Right ventricle myocardium inferior (tissue), 1 donor: ENCODE measurements at regions of chr4 and their contacts with region 1.

Region 1: DNA sequence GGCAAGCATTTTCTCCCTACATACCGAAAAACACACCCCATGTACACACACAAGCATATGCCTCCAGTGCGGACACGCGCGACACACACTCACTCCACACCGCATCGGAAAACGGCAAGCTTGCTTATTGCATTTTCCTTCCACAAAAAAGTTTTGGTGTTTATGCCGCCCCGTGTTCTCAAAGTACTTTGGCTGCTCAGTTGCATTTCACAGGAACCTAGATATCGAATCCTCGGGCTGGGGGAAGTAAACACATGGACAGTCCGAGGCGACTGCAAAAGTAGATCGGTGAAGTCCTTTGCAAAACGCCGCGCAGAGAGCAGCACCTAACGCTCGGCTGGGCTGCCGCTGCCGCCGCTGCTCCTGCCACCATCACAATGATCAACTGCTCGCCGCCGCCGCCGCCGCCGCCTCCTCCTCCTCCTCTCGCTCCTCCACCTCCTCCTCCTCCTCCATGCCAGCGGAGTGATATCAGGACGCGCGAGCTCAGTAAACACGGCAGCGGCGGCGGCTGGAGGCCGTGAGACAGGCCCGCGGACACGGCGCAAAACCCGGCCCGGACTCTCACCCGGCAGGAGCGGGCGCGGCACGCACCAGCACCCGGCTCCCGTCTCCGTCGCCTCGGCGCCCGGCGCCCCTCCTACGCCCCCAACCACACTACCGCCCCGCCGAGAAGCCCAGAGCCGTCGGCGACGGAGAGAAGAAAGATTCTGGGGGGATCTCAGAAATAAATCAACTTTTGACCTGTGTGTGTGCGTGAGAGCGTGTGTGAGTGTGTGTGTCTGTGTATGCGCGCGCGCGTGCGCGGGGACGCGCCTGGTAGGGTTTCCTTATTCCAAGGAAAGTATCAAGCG is at the start of gene MAML3:
- DNase-seq: peak; percentile 97
- ATAC-seq: peak; percentile 75
- total RNA-seq, gene MAML3: 2.3 TPM

Region 2: DNA sequence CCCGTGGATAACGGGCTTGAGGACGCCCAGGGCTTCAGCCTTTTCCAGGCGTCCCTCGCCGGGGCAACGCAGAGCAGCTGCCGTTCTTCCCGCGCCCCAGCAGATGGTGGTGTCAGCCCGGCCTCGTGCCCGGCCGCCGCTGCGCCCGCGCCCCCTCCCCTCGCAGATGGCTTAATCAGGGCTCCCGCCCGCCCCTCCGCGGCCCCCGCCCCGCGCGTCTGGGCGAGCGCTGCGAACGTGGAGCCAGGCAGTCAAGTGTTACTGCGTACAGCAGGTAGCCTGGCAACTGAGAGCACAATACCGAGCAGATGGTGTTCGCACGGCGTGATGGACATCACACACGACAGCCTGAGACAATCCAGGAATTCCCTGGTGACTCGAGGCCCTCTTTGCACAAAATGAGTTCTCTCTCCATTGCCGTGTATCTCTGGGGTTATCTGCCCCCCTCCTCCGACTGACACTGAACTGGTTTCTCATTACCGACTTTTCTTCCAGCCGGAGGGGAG is 419.0 kb before region 1 on chr4:
- intact Hi-C with region 1: loop called (anchors 2 kb)
- DNase-seq: peak; percentile 94
- ATAC-seq: peak; percentile 95

Region 3: GRCh38 chr4:139913398-139913990 is 240.5 kb before region 1 on chr4:
- intact Hi-C with region 1: loop called (anchors 5 kb)
- DNase-seq: no peak
- ATAC-seq: no peak

Region 4: GRCh38 chr4:140049024-140049848 is 104.7 kb before region 1 on chr4:
- intact Hi-C with region 1: loop called (anchors 5 kb)
- DNase-seq: peak; percentile 71
- ATAC-seq: peak; percentile 67

Region 5: GRCh38 chr4:140237987-140238692 is 84.2 kb after region 1 on chr4:
- intact Hi-C with region 1: loop called (anchors 2 kb)
- DNase-seq: peak; percentile 96
- ATAC-seq: peak; percentile 92

Region 6: DNA sequence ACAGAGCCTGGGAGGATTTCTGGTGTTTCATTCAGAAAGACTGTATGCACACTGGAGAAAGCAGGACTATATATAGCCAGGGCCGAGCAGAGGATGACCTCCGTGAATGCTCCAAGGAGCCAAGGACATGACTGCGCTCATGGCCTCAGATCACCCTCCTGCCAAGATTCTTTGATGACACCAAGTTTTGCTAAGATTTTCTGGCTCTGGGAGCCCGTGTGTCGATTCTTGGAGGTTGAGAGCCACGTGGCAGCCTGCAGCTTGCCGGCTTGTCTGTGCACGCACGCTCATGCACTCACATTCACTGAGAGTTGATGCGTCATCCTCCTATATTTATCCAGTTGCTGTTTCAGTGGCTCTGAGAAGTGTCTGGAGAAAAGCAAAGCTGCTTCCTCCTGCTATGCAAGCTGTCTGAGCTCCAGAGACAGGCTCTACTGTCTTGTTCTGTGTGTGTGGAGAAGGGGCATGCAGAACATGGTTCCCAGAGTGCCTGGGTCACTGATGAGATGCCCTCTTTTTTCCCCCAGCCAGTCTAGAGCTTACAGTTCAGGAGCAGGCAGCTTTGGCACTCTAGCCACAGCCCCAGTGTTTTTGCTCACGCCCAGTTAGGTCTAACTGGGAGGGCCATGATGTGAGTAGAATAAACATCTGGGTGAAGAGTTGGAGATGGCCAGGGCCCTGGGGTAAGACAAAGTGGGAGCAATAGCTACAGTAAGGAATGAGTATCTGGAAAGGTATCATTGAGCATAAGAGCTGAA is 154.6 kb after region 1 on chr4:
- intact Hi-C with region 1: loop called (anchors 2 kb)
- DNase-seq: peak; percentile 83
- ATAC-seq: peak; percentile 91

Region 7: GRCh38 chr4:140641789-140642439 is 488.0 kb after region 1 on chr4:
- intact Hi-C with region 1: no loop called
- DNase-seq: no peak
- ATAC-seq: no peak